A549 (cell line): ENCODE measurements at regions of chr9 and their contacts with region 1.

Region 1: DNA sequence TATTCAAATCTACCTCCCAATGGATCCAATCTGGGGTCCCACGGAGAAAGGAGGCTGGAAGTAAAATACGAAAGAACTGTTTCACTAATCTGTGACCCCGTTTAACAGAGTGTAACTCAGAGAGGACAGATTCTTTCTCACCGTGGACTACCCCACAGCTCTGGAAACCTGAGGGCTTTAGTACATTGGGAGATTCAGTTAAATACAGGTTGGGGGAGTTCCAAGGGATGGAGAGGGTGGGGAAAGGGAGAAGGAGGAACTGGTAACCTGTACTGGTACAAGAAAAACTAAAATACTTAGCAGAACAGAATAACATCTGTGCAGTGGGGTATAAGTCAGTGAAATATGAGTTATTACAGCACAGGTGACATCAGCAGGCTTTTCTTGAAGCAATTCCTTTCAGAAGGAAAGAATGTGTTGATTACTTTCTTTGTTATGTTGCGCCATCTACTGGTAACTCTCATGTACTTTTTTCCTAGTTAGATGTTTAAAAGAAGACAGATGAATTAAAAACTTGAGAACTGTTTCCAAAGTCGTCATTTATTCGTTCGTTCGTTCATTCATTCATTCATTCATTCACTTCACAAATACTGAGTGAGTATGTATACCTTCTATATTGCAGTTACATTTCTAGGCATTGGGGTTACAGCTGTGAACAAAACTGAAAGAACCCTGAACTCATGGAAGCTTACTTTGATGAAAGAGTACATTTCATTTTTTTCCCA is 30.0 kb upstream of the STOM start:
- DNase-seq: peak; percentile 40 to 80
- ATAC-seq: peak; percentile 82 to 89
- H3K4me3 ChIP-seq: no peak overlapping the region
- H3K27ac ChIP-seq: peak overlapping the region; percentile 39 to 55; a peak in 5 of 6 replicates
- H3K4me1 ChIP-seq: peaks cover 8% of the 10 kb centered on the region; the same call in 2 of the 3 replicates
- CTCF ChIP-seq: peak; percentile 86
- EP300 ChIP-seq: no peak
- POLR2A ChIP-seq: no peak
- RAD21 ChIP-seq: peak; percentile 89 to 92

Region 2: DNA sequence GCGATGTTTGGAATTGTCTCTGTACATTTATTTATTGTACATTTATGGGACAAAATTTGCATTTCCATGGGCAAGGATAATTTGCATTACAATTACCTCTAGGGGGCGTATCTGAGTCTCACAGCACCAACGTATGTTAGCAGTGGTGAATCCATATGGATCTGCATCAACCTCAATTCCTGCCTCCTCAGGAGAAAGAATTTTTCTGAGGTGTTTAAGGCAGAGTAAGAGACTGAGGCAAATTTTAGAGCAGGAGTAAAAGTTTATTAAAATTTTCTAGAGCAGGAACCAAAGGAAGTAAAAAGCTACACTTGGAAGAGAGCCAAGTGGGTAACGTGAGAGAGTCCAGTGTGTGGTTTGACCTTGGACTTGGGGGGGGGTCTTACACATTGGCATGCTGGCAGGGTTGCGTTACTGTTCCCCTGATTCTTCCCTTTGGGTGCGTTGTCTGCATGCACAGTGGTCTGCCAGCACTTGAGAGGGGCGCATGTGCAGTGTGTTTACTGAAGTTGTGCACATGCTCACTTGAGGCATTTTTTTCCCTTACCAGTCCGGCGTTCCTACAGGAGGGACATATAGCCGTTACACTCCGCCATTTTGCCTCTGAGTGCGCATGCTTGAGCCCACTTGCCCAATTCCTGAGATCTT is 177.4 kb before region 1 on chr9:
- CTCF ChIA-PET with region 1: interaction called, 10 read pairs
- POLR2A ChIA-PET with region 1: no interaction called
- DNase-seq: peak in 1 of 2 experiments; percentile 55
- ATAC-seq: peak; percentile 59 to 79; a peak in 4 of 6 replicates
- H3K4me3 ChIP-seq: no peak overlapping the region
- H3K27ac ChIP-seq: no peak overlapping the region
- H3K4me1 ChIP-seq: 0 out of 3 replicates have a peak, but pooled peaks cover 7% of the 10 kb centered on the region
- CTCF ChIP-seq: peak; percentile 78
- EP300 ChIP-seq: no peak
- POLR2A ChIP-seq: no peak
- RAD21 ChIP-seq: peak; percentile 51 to 66

Region 3: GRCh38 chr9:121286973-121287741 is 112.9 kb before region 1 on chr9:
- CTCF ChIA-PET with region 1: interaction called, 11 read pairs
- POLR2A ChIA-PET with region 1: no interaction called
- DNase-seq: peak; percentile 96 to 97
- ATAC-seq: peak; percentile 90 to 92
- H3K4me3 ChIP-seq: no peak overlapping the region
- H3K27ac ChIP-seq: peak overlapping the region; percentile 92 to 93
- H3K4me1 ChIP-seq: peaks cover 61% of the 10 kb centered on the region
- CTCF ChIP-seq: peak; percentile 35; the same call in 1 of the 3 replicates
- EP300 ChIP-seq: peak in 1 of 2 experiments; percentile 45; a peak in 2 of 5 replicates
- POLR2A ChIP-seq: no peak; the same call in 1 of the 2 replicates
- RAD21 ChIP-seq: peak in 1 of 2 experiments; percentile 44; a peak in 3 of 5 replicates

Region 4: GRCh38 chr9:121326130-121326838 is 73.8 kb before region 1 on chr9:
- CTCF ChIA-PET with region 1: interaction called, 410 read pairs
- POLR2A ChIA-PET with region 1: no interaction called
- DNase-seq: peak in 1 of 2 experiments; percentile 88
- ATAC-seq: peak; percentile 38 to 65; a peak in 5 of 6 replicates
- H3K4me3 ChIP-seq: no peak overlapping the region
- H3K27ac ChIP-seq: peak overlapping the region; percentile 90 to 92
- H3K4me1 ChIP-seq: peaks cover 61% of the 10 kb centered on the region
- CTCF ChIP-seq: no peak
- EP300 ChIP-seq: peak in 1 of 2 experiments; percentile 24; a peak in 1 of 5 replicates
- POLR2A ChIP-seq: no peak
- RAD21 ChIP-seq: no peak

Region 5: DNA sequence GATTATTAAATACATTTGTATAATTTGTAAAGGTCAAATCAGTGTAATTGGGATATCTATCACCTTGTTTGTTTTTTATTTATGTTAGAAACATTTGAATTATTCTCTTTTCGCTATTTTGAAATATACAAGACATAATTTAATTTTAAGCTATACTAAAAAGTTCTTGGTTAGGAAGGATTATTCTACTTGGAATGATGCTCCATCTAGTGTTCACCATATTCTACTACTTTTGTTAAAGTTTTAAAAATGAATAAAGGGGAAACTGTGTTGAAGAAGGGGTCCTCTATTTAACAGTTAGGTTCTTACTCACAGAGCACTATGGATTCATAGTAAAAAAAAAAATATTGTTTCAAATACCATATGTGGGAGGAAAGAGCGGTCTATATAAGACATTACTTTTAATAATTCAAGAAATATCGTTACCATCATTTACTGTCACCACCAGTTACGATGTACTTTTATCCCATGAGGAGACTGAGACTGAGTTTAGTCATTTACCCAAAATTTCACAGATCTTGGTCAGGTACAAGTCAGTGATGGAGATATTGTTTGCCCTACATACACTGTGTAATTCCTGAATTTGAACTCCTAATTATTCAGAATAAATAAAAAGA is 23.7 kb before region 1 on chr9:
- CTCF ChIA-PET with region 1: interaction called, 12 read pairs
- POLR2A ChIA-PET with region 1: no interaction called
- DNase-seq: no peak
- ATAC-seq: no peak
- H3K4me3 ChIP-seq: no peak overlapping the region
- H3K27ac ChIP-seq: peak overlapping the region in 1 of 2 experiments; percentile 94; a peak in 2 of 6 replicates
- H3K4me1 ChIP-seq: peaks cover 45% of the 10 kb centered on the region
- CTCF ChIP-seq: peak; percentile 52
- EP300 ChIP-seq: no peak
- POLR2A ChIP-seq: no peak
- RAD21 ChIP-seq: peak; percentile 72 to 79

Region 6: GRCh38 chr9:121439711-121440664 is 39.9 kb after region 1 on chr9:
- CTCF ChIA-PET with region 1: interaction called, 13 read pairs
- POLR2A ChIA-PET with region 1: no interaction called
- DNase-seq: peak; percentile 49 to 70
- ATAC-seq: peak; percentile 92 to 97
- H3K4me3 ChIP-seq: no peak overlapping the region
- H3K27ac ChIP-seq: no peak overlapping the region
- H3K4me1 ChIP-seq: no peaks in the 10 kb centered on the region
- CTCF ChIP-seq: peak; percentile 40
- EP300 ChIP-seq: no peak
- POLR2A ChIP-seq: no peak
- RAD21 ChIP-seq: peak; percentile 33 to 41; a peak in 2 of 5 replicates